PC-9 (cell line): ENCODE measurements at regions of chr4 and their contacts with region 1.

Region 1: GRCh38 chr4:40719008-40719623 is 30.6 kb upstream of the NSUN7 start:
- DNase-seq: peak; percentile 28 to 83
- H3K4me3 ChIP-seq: 0 out of 2 replicates have a peak overlapping the region, but pooled peaks have one; percentile 8
- H3K27ac ChIP-seq: peak overlapping the region; percentile 66
- H3K4me1 ChIP-seq: peaks cover 59% of the 10 kb centered on the region
- H3K27me3 ChIP-seq: no peaks in the 10 kb centered on the region
- CTCF ChIP-seq: peak; percentile 76

Region 2: DNA sequence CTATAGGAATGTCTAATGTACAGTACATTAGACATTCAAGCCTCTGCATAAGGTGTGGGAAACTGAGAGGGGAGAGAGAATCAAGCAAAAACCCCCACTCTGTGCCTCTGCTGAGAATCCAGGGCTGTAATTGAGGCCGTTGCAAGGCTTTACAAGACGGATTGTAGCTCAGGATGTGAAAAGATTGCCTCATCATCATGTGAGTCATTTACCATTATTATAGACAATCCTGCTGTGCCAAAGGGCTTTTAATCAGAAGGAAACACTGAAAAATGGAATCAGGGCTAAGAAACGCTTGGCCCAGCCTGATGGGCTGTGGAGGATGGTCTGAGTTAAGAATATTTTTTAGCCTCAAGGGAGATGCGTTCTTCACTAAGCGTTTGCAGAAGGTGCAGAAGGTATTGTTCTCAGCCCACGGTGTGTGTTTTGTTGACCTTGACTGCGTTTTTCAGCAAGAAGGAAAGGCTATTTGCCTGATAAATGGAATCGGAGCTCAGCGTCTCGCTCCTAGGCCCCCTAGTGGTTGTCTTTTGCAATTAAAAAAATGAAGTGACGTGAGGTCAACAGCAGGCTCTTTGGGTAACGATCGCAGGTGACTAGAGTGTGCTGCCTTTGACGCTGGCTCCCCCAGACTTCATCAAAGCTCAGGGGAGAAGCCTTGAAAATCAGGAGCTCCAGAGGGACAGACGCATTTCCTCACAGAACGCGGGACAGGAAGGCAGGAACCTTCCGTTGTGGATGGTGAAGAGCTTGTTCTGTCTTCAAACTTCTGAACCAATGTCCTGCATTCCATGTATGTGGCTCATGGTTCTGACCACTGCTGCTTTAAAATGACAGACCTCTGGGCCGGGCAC is 402.1 kb before region 1 on chr4:
- CTCF ChIA-PET with region 1: no interaction called
- POLR2A ChIA-PET with region 1: no interaction called
- intact Hi-C with region 1: loop called (anchors 5 kb)
- DNase-seq: peak; percentile 67 to 88
- H3K4me3 ChIP-seq: peak overlapping the region; percentile 46
- H3K27ac ChIP-seq: peak overlapping the region; percentile 99
- H3K4me1 ChIP-seq: peaks cover 73% of the 10 kb centered on the region
- H3K27me3 ChIP-seq: no peaks in the 10 kb centered on the region
- CTCF ChIP-seq: peak; percentile 94

Region 3: DNA sequence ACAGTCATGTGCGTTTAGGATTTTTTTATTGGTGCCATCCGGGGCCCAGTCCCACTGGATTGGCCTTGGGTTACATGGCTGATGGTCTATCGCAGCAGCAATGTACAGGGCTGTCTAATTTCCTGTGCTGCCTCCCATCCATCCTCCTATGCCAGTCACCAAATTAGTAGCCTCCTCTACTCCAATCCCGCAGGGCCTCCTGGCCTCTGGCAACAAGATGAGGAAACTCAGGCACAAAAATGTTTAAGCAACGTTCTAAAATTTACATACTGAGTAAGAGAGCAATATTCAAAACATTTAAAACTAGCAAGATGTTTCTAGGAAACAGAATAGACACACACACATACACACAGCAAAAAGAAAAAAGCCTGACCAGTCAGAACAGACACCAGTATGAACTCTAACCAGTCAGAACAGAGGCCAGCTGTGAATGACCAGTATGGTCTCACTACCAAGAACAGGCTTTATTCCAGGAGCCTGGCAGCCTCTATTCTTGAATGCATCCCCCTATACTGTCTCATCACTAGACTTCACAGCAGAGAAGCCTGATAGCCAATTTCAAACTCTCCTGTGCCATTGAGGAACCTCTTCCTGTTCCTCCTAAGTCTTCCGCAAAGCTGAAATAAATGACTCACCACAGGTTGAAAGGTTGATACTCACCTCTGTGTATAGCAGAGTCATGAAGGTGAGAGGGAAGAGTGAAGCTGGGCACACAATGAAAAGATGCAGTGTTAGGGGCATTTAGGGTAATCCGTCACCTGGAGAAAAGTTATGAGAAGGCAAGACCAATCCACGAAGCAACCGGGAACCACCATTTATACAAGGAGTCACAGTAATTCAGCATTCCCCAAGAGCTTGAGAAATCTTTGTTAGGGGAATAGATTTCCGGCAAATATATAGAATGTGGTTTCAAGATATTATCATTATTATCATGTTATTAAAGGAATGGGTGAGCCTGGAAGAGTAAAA is 341.2 kb before region 1 on chr4:
- CTCF ChIA-PET with region 1: no interaction called
- POLR2A ChIA-PET with region 1: no interaction called
- intact Hi-C with region 1: loop called (anchors 1 kb)
- DNase-seq: peak; percentile 55 to 89
- H3K4me3 ChIP-seq: no peak overlapping the region
- H3K27ac ChIP-seq: peak overlapping the region; percentile 85
- H3K4me1 ChIP-seq: peaks cover 33% of the 10 kb centered on the region
- H3K27me3 ChIP-seq: no peaks in the 10 kb centered on the region
- CTCF ChIP-seq: no peak

Region 4: DNA sequence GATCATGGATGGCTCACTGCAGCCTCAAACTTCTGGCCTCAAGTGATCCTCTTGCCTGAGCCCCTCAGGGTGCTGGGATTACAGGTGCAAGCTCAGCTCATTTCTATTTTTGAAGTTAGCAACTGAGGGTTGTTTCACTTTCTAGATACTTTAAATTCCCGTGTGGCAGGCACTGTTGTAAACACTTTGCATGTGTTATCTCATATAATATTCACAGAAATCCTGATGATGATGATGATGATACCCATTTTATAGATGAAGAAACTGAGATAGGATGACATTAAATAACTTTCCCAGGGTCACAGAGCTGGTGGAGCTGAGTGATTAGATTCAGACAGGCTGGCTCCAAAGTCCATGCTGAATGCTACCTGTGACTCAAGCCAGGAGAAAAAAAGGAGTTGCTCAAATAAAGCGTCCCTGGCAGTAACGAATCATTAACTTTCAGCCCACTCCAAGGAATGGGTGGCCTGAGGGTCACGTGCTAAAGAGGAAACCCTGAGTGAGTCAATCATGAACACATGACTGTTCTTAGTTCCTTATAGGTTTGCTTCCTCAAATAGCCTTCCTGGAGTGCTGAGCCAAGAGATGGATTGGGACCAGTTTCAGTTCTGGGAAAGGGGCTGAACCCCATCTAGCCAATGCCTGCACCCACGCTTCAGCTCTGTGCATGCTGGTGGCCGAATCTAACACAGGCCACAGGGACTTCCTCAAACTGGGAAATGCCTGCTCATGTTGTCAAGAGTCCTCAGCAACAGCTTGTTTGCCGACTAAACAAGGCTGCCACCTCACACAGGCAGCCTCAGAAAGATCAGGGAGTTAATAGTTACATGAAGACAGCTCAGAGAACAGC is 142.3 kb before region 1 on chr4:
- CTCF ChIA-PET with region 1: no interaction called
- POLR2A ChIA-PET with region 1: no interaction called
- intact Hi-C with region 1: loop called (anchors 2 kb)
- DNase-seq: peak; percentile 76 to 97
- H3K4me3 ChIP-seq: peak overlapping the region; percentile 28; the same call in 1 of the 2 replicates
- H3K27ac ChIP-seq: peak overlapping the region; percentile 81
- H3K4me1 ChIP-seq: peaks cover 49% of the 10 kb centered on the region
- H3K27me3 ChIP-seq: no peaks in the 10 kb centered on the region
- CTCF ChIP-seq: no peak